ENCODE measurements at regions of chr2 and their contacts with region 1.

Region 1: GRCh38 chr2:227267410-227268148 is 57.5 kb upstream of the MFF start:
- DNase-seq: peak in 2 of 5 donors; percentile 13 to 27
- H3K4me3 ChIP-seq: no peak overlapping the region
- H3K27ac ChIP-seq: no peak overlapping the region
- H3K4me1 ChIP-seq: peaks cover 2% of the 10 kb centered on the region
- H3K27me3 ChIP-seq: no peaks in the 10 kb centered on the region
- CTCF ChIP-seq: no peak
- EP300 ChIP-seq: no peak
- POLR2A ChIP-seq: no peak

Region 2: GRCh38 chr2:227293531-227293930 is 26.0 kb after region 1 on chr2:
- intact Hi-C with region 1: loop called in 1 of 4 experiments (anchors 1 kb)
- DNase-seq: no peak
- H3K4me3 ChIP-seq: no peak overlapping the region
- H3K27ac ChIP-seq: no peak overlapping the region
- H3K4me1 ChIP-seq: no peaks in the 10 kb centered on the region
- H3K27me3 ChIP-seq: no peaks in the 10 kb centered on the region
- CTCF ChIP-seq: no peak
- EP300 ChIP-seq: no peak
- POLR2A ChIP-seq: no peak